Dendritic cell treated with granulocyte-macrophage colony-stimulating factor and Interleukin-4, amounts not matched to agents 40 ng/mL and 50 ng/mL, for 4 days (primary cell): ENCODE measurements at regions of chr1 and their contacts with region 1.

Region 1: DNA sequence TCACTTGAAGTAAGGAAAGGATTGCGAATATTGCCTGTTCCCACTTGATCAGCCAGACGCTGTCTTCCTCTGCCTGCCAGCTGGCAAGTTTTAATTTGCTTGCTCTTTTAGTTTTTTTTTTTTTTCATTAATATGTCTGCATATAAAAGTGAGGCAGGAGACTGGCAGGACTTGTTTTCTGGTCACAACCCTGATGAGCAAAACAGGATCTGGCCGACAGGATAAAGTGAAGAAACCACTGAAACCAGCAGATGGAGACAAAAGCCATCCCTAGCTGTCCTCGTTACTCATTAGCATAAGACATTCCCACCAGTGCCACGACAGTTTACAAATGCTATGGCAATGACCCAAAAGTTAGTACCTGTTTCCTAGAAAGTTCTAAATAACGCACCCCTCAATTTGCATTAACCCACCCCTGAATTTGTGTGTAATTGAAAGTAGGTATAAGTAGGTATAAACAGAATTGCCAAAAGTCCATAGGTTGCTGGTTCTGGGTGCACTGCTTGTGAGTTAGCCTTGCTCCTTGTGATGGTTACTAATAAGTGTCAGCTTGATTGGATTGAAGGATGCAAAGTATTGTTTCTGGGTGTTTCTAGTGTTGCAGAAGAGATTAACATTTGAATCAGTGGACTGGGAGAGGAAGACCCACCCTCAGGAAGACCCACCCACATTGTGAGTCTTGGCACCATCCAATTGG is 60.8 kb downstream of the ZNF684 start:
- H3K4me3 Mint-ChIP-seq: no peak overlapping the region
- H3K27ac Mint-ChIP-seq: no peak overlapping the region
- H3K4me1 Mint-ChIP-seq: peaks cover 28% of the 10 kb centered on the region
- H3K27me3 Mint-ChIP-seq: peaks cover 5% of the 10 kb centered on the region

Region 2: GRCh38 chr1:40668769-40669525 is 76.7 kb after region 1 on chr1:
- intact Hi-C with region 1: loop called (anchors 1 kb)
- H3K4me3 Mint-ChIP-seq: peak overlapping the region; percentile 41
- H3K27ac Mint-ChIP-seq: peak overlapping the region; percentile 26
- H3K4me1 Mint-ChIP-seq: peaks cover 19% of the 10 kb centered on the region
- H3K27me3 Mint-ChIP-seq: peaks cover 15% of the 10 kb centered on the region

Region 3: GRCh38 chr1:40868051-40868794 is 276.0 kb after region 1 on chr1:
- intact Hi-C with region 1: no loop called
- H3K4me3 Mint-ChIP-seq: no peak overlapping the region
- H3K27ac Mint-ChIP-seq: no peak overlapping the region
- H3K4me1 Mint-ChIP-seq: peaks cover 13% of the 10 kb centered on the region
- H3K27me3 Mint-ChIP-seq: peaks cover 4% of the 10 kb centered on the region